ENCODE measurements at regions of chr13 and their contacts with region 1.

Region 1: DNA sequence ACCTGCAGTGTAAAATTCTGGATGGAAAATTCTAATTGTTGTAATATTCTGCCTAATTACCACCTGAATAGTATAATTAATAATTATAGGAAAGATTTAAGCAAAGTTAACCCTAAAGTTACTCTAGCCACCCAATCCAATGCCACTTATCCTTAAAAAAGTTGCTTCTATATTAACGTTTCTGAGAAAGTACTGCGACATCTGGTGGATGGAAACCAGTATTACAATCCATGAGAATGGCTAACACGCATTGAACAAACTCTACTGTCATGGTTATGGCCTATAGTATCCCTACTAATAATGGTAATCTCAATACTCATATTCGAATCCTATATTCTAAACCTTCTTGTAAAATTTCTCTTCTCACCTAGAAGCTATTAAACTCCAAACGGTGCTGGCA is 1551.8 kb downstream of the SLITRK1 start:
- DNase-seq: no peak
- ATAC-seq: peak; percentile 77
- H3K4me3 ChIP-seq: no peak overlapping the region
- H3K27ac ChIP-seq: no peak overlapping the region
- H3K4me1 ChIP-seq: no peaks in the 10 kb centered on the region
- H3K27me3 ChIP-seq: no peaks in the 10 kb centered on the region
- CTCF ChIP-seq: peak; percentile 48 to 58 (median 52)
- EP300 ChIP-seq: no peak
- POLR2A ChIP-seq: no peak
- RAD21 ChIP-seq: peak; percentile 32; the same call in 1 of the 2 replicates

Region 2: DNA sequence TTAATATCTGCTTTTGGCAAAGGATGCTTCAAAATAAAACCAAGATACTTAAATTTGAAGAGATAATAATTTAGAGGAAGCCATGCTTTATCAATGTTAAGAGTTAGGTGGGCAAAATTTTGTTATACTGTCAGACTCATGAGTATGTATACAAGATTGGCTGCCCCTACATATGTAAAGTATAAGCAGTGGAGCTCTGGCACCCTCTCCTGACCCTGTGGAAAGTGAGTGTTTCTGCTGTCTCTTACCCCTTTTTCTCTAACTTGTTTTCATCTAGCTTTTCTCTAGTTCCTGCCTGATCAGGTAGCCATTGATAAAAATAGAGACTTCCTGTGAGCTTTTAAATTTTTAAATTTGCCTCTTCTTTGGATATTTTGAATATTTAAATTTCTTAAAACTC is 1278.6 kb before region 1 on chr13:
- CTCF ChIA-PET with region 1: no interaction called
- POLR2A ChIA-PET with region 1: no interaction called
- RAD21 ChIA-PET with region 1: no interaction called
- SMC1A ChIA-PET with region 1: no interaction called
- in situ Hi-C with region 1: no loop called
- intact Hi-C with region 1: loop called (anchors 10 kb)
- DNase-seq: no peak
- ATAC-seq: no peak
- H3K4me3 ChIP-seq: no peak overlapping the region
- H3K27ac ChIP-seq: no peak overlapping the region
- H3K4me1 ChIP-seq: no peaks in the 10 kb centered on the region
- H3K27me3 ChIP-seq: no peaks in the 10 kb centered on the region
- CTCF ChIP-seq: peak in 1 of 3 experiments; percentile 7; a peak in 1 of 6 replicates
- EP300 ChIP-seq: no peak
- POLR2A ChIP-seq: no peak
- RAD21 ChIP-seq: no peak

Region 3: DNA sequence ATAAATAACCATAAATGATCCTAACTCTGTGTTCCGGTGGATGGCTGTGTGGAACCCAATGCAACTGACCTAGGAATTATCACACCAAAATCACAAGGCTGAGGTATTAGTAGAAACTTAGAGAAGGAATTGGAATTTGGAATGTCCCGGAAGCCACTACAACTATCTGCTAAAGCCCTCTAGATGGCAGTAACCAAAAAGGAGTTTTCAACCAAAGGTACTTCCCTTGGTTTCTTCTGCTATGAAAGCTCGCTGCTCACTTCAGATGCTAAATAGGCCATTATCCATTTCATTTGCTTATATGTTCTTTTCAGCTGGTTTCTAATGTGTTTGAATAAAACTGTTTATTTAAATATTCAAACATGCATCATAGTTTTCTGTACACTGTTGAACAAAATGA is 400.5 kb before region 1 on chr13:
- CTCF ChIA-PET with region 1: interaction called, 3 read pairs
- POLR2A ChIA-PET with region 1: no interaction called
- RAD21 ChIA-PET with region 1: no interaction called
- SMC1A ChIA-PET with region 1: no interaction called
- in situ Hi-C with region 1: no loop called
- intact Hi-C with region 1: loop called (anchors 1 kb)
- DNase-seq: no peak
- ATAC-seq: peak; percentile 69
- H3K4me3 ChIP-seq: no peak overlapping the region
- H3K27ac ChIP-seq: no peak overlapping the region
- H3K4me1 ChIP-seq: no peaks in the 10 kb centered on the region
- H3K27me3 ChIP-seq: no peaks in the 10 kb centered on the region
- CTCF ChIP-seq: peak; percentile 16 to 40 (median 35); a peak in 3 of 6 replicates
- EP300 ChIP-seq: no peak
- POLR2A ChIP-seq: no peak
- RAD21 ChIP-seq: no peak

Measured in GM12878 (cell line).